H1 (cell line): ENCODE measurements at regions of chr14 and their contacts with region 1.

Region 1: DNA sequence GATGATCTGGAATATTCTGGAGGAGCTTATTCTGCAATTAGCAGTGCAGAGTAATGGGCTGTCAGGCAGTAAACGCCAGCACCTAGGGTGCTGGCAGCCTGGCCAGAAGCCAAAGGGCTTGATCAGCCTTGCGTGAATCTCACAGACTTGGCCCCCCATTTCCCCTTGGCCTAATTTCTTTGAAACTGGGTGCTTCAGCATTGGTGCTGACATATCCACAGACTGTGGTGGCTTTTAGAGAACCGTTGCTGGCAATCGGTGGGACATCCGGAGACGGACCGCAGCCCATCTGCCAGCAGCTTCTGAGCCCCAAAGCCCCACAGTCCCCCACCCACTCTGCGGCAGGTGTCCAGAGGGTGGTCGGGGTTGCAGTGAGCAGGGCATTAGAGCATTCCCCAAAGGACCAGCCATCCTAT is 157.1 kb downstream of the CALM1 start:
- DNase-seq: no peak
- H3K4me3 ChIP-seq: no peak overlapping the region
- H3K27ac ChIP-seq: no peak overlapping the region
- H3K4me1 ChIP-seq: peaks cover 0 to 17% (median 14%) of the 10 kb centered on the region in 4 experiments; a peak in 6 of 7 replicates
- H3K27me3 ChIP-seq: no peaks in the 10 kb centered on the region; a peak in 1 of 7 replicates
- CTCF ChIP-seq: no peak
- EP300 ChIP-seq: no peak
- POLR2A ChIP-seq: no peak
- RAD21 ChIP-seq: no peak

Region 2: GRCh38 chr14:90419200-90419599 is 134.7 kb before region 1 on chr14:
- CTCF ChIA-PET with region 1: no interaction called
- POLR2A ChIA-PET with region 1: no interaction called
- DNase-seq: no peak
- H3K4me3 ChIP-seq: no peak overlapping the region
- H3K27ac ChIP-seq: no peak overlapping the region
- H3K4me1 ChIP-seq: peaks cover 0 to 8% (median 0%) of the 10 kb centered on the region in 4 experiments; a peak in 2 of 7 replicates
- H3K27me3 ChIP-seq: no peaks in the 10 kb centered on the region
- CTCF ChIP-seq: no peak
- EP300 ChIP-seq: no peak
- POLR2A ChIP-seq: no peak
- RAD21 ChIP-seq: no peak

Region 3: DNA sequence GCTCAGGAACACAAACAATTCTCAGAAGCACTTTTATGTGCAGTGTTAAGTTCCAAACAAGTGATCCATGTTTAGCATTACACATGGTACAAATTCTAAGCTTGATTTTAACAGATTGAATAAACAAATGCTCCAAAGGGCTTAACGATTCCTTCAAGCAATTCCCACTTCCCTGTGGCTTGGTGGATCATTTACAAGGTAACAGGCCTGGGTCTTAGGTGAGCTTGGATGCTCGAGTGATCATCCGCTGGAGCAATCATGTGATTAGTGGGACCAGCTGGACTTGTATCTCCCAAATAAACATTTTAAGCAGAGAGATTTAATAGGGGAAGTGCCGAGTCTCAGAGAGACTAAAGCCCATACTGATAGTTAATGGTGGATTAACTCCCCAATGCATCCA is 86.4 kb before region 1 on chr14:
- CTCF ChIA-PET with region 1: no interaction called
- POLR2A ChIA-PET with region 1: no interaction called
- DNase-seq: no peak
- H3K4me3 ChIP-seq: no peak overlapping the region
- H3K27ac ChIP-seq: no peak overlapping the region
- H3K4me1 ChIP-seq: no peaks in the 10 kb centered on the region
- H3K27me3 ChIP-seq: no peaks in the 10 kb centered on the region
- CTCF ChIP-seq: no peak
- EP300 ChIP-seq: no peak
- POLR2A ChIP-seq: no peak
- RAD21 ChIP-seq: no peak

Region 4: DNA sequence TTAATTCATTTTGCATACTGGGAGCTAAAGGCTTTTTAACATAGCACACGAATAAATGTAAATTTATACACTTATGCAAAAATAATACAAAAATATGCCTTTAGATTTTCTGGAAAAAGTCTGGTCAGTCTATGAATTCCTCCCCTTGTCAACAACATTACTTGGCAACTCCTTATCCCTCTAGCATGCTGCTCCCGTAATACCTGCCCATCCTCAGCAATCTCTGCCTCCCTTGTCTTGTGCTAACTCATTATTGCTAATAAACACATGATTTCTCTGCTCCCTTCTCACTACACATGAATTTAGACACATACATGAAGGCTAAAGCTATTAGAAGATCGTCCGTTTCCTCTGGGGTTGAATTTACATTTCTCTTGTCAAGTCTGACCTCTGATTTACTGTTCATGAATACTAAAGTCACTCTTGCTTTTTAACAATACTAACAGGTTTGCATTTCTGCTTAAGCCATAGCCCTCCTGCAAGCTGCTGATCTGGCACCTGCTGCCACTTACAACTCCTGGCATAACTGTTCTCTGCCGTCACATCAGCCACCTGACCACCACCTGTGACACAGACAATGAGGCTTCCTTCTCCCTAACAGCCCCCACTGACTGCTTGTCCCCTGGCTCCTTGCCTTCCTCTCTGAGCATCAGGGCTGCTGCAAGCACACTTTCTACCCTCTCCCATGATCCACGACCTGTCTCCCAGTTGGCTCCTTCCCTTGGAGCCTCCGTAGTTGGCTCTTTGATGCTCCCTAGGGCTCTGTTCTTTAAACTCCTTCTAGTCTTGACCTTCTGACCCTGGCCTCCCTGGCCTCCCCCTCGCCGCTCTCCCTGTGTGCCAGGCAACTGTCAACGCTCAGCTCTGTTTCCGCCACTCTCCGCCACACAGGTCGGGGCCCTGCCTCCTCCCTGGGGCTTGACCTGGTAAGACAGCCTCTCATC is 20.5 kb after region 1 on chr14:
- CTCF ChIA-PET with region 1: interaction called, 10 read pairs
- POLR2A ChIA-PET with region 1: interaction called, 3 read pairs
- DNase-seq: no peak
- H3K4me3 ChIP-seq: no peak overlapping the region; a peak in 1 of 8 replicates
- H3K27ac ChIP-seq: no peak overlapping the region
- H3K4me1 ChIP-seq: peaks cover 9 to 30% (median 20%) of the 10 kb centered on the region in 4 experiments
- H3K27me3 ChIP-seq: 0 out of 7 replicates have a peak, but pooled peaks cover 0 to 5% (median 0%) of the 10 kb centered on the region in 4 experiments
- CTCF ChIP-seq: no peak
- EP300 ChIP-seq: no peak; a peak in 1 of 3 replicates
- POLR2A ChIP-seq: no peak
- RAD21 ChIP-seq: no peak